ENCODE measurements at regions of chr11 and their contacts with region 1.

Region 1: DNA sequence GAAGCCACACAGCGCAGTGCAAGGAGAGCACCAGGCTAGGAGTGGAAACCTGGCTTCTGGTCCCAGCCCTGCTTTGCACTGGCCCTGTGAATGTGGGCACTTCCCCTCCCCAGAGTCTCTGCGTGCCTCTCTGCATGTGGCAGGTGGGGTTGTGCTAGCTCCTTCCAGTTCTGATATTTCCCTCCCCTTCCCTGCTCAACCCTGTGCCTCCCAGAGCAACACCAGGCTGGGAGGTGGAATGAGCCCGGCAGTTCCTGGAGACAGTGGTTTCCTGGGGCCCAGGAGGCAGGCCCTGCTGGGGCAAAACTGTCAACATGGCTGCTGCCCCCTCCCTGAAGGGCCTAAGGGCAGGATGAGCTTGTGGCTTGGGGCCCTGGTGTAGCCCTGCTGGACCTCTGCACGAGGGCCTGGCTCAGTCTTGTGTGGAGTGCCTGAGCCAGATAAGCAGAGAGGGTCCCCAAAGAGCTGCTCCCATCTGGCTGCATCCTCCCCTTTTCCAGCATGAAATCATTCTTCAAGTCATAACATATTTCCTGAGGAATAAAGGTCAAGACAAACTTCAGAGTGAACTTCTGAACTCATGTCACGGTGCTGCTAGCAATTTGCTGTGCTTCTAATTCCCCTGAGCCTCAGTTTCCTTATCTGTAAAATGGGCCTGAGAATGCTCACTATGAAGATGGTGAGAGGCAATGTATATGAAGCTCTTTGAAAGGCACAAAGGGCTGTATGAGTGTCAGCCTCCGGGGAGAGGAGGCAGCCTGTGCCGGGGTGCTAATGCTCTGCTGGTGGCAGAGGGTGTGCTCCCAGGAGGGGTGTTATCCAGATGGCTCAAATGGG is 116.0 kb downstream of the GRIK4 start:
- DNase-seq: no peak
- ATAC-seq: no peak
- H3K4me3 ChIP-seq: no peak overlapping the region
- H3K27ac ChIP-seq: no peak overlapping the region
- H3K4me1 ChIP-seq: no peaks in the 10 kb centered on the region
- H3K27me3 ChIP-seq: peaks cover 0 to 7% (median 2%) of the 10 kb centered on the region in 3 donors
- CTCF ChIP-seq: no peak

Region 2: DNA sequence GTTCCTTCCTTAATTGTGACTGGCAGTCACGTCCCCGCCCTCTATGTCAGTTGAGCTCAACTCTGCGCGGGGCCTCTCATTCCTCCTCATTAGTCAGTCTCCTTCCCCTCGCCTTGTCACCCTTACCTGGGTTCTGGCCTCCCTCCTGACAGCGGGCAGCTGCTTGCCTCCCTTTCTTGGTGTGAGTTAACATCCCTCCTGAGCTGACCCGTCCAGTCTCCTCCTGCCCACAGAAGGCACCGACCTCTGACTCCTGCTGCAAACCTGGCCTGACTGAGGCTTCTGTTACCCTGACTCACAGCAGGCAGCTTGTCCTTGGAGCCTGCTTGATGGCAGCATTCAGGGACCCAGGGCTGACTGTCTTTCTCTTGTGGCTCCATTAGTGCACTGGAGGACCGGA is 70.7 kb before region 1 on chr11:
- intact Hi-C with region 1: loop called in 1 of 2 experiments (anchors 2 kb)
- DNase-seq: no peak
- ATAC-seq: no peak
- H3K4me3 ChIP-seq: no peak overlapping the region
- H3K27ac ChIP-seq: no peak overlapping the region
- H3K4me1 ChIP-seq: no peaks in the 10 kb centered on the region
- H3K27me3 ChIP-seq: peaks cover 0 to 3% (median 0%) of the 10 kb centered on the region in 3 donors
- CTCF ChIP-seq: no peak

Region 3: GRCh38 chr11:120696597-120697218 is 69.2 kb after region 1 on chr11:
- intact Hi-C with region 1: no loop called
- DNase-seq: no peak
- ATAC-seq: no peak
- H3K4me3 ChIP-seq: no peak overlapping the region
- H3K27ac ChIP-seq: no peak overlapping the region
- H3K4me1 ChIP-seq: no peaks in the 10 kb centered on the region
- H3K27me3 ChIP-seq: peaks cover 0 to 7% (median 0%) of the 10 kb centered on the region in 3 donors
- CTCF ChIP-seq: no peak

Region 4: GRCh38 chr11:120773501-120774031 is 146.0 kb after region 1 on chr11:
- intact Hi-C with region 1: no loop called
- DNase-seq: no peak
- ATAC-seq: no peak
- H3K4me3 ChIP-seq: no peak overlapping the region
- H3K27ac ChIP-seq: no peak overlapping the region
- H3K4me1 ChIP-seq: no peaks in the 10 kb centered on the region
- H3K27me3 ChIP-seq: peaks cover 0 to 4% (median 0%) of the 10 kb centered on the region in 3 donors
- CTCF ChIP-seq: no peak

Region 5: DNA sequence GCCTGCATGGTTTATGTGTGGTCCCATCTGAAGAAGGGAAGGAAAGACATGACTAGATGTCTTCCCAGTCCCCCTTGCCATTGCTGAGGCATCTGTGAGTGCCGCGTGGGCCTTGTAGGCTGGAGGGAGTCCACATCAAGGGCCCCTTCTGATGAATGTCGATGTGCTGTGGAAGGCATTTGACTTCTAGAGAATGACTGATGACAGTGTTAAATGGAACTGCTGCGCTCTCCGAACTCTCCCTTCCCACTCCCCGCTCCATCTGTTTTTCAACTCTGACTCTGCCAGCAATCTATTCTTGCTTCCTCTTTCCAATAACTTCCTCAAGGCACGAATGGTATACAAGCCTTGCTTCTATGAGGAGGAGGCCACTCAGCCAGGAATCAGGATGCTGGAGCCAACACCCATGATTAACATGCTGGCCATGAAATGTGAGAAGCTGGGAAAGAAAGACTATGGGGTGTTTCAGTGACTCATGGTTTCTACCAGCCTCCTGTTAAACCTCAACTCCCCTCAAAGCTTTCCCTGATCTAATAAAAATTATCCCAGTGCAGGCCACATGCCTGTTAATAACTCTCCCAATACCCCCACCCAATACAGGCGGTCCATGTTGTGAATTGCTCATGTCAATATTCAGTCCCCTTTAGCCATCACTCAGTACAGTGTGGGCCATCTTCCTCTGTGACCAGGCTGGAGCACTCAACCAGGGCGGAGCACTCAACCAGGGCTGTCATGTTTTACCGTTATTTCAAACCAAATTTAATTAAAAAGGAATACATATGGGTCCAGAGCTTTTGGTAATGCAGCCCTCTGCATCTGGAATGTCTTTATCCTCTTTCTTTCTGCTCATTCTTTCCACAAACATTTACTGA is 350.0 kb after region 1 on chr11:
- intact Hi-C with region 1: no loop called
- DNase-seq: no peak
- ATAC-seq: peak in 1 of 4 donors; percentile 39
- H3K4me3 ChIP-seq: no peak overlapping the region
- H3K27ac ChIP-seq: no peak overlapping the region
- H3K4me1 ChIP-seq: no peaks in the 10 kb centered on the region
- H3K27me3 ChIP-seq: peaks cover 0 to 20% (median 0%) of the 10 kb centered on the region in 3 donors
- CTCF ChIP-seq: no peak